ENCODE measurements at regions of chr12 and their contacts with region 1.

Region 1: GRCh38 chr12:12442548-12443071 is 85.7 kb downstream of the BORCS5 start:
- DNase-seq: peak in 1 of 3 donors; percentile 35
- H3K4me3 ChIP-seq: no peak overlapping the region
- H3K4me3 Mint-ChIP-seq: no peak overlapping the region
- H3K27ac ChIP-seq: no peak overlapping the region
- H3K27ac Mint-ChIP-seq: peak overlapping the region in 2 of 7 donors; percentile 11 to 34
- H3K4me1 ChIP-seq: peaks cover 7 to 10% of the 10 kb centered on the region in 2 donors
- H3K4me1 Mint-ChIP-seq: peaks cover 18% of the 10 kb centered on the region
- H3K27me3 ChIP-seq: no peaks in the 10 kb centered on the region
- H3K27me3 Mint-ChIP-seq: peaks cover 0 to 1% (median 0%) of the 10 kb centered on the region in 3 donors
- CTCF ChIP-seq: no peak

Region 2: DNA sequence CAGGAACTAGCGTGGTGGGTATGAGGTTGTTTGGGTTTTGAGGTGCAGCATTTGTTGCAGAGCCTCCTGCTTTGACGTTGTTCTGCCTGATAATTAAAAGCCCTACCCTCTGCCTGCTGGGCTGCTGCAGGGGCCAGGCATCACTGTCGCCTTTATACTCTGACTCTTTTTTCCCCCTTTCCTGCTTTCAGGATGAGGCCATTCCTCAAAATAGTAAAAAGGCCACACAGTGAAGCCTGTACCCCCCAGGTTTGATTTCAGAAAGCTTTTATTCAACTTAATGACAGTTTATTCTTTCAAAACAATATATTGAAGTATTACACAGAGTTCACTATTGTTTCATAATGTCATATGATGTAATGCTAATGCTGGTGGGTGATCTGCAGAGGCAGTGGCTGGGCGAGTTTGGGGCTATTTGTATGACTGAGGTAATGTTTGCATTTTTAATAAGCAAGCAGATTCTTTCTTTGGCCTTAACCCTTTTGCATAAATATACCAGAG is 76.6 kb before region 1 on chr12:
- intact Hi-C with region 1: no loop called
- DNase-seq: no peak
- H3K4me3 ChIP-seq: no peak overlapping the region
- H3K4me3 Mint-ChIP-seq: no peak overlapping the region
- H3K27ac ChIP-seq: peak overlapping the region in 1 of 2 donors; percentile 23
- H3K27ac Mint-ChIP-seq: peak overlapping the region in 4 of 7 donors; percentile 3 to 58 (median 45)
- H3K4me1 ChIP-seq: peaks cover 0 to 6% of the 10 kb centered on the region in 2 donors
- H3K4me1 Mint-ChIP-seq: peaks cover 13% of the 10 kb centered on the region
- H3K27me3 ChIP-seq: no peaks in the 10 kb centered on the region
- H3K27me3 Mint-ChIP-seq: no peaks in the 10 kb centered on the region
- CTCF ChIP-seq: no peak

Region 3: GRCh38 chr12:12384571-12385340 is 57.9 kb before region 1 on chr12:
- intact Hi-C with region 1: loop called in 1 of 2 experiments (anchors 10 kb)
- DNase-seq: no peak
- H3K4me3 ChIP-seq: no peak overlapping the region
- H3K4me3 Mint-ChIP-seq: no peak overlapping the region
- H3K27ac ChIP-seq: no peak overlapping the region
- H3K27ac Mint-ChIP-seq: peak overlapping the region in 2 of 7 donors; percentile 37 to 56
- H3K4me1 ChIP-seq: peaks cover 7 to 9% of the 10 kb centered on the region in 2 donors
- H3K4me1 Mint-ChIP-seq: peaks cover 11% of the 10 kb centered on the region
- H3K27me3 ChIP-seq: no peaks in the 10 kb centered on the region
- H3K27me3 Mint-ChIP-seq: peaks cover 0 to 2% (median 1%) of the 10 kb centered on the region in 3 donors
- CTCF ChIP-seq: no peak

Region 4: GRCh38 chr12:12403264-12404248 is 39.1 kb before region 1 on chr12:
- intact Hi-C with region 1: loop called in 1 of 2 experiments (anchors 5 kb)
- DNase-seq: no peak
- H3K4me3 ChIP-seq: no peak overlapping the region
- H3K4me3 Mint-ChIP-seq: no peak overlapping the region
- H3K27ac ChIP-seq: no peak overlapping the region
- H3K27ac Mint-ChIP-seq: peak overlapping the region in 2 of 7 donors; percentile 21 to 54
- H3K4me1 ChIP-seq: peaks cover 6 to 10% of the 10 kb centered on the region in 2 donors
- H3K4me1 Mint-ChIP-seq: peaks cover 24% of the 10 kb centered on the region
- H3K27me3 ChIP-seq: no peaks in the 10 kb centered on the region
- H3K27me3 Mint-ChIP-seq: no peaks in the 10 kb centered on the region
- CTCF ChIP-seq: no peak

Region 5: GRCh38 chr12:12916135-12916944 is 473.7 kb after region 1 on chr12:
- intact Hi-C with region 1: no loop called
- DNase-seq: peak; percentile 67 to 75 (median 72)
- H3K4me3 ChIP-seq: peak overlapping the region in 1 of 3 experiments; percentile 45
- H3K4me3 Mint-ChIP-seq: peak overlapping the region; percentile 4 to 77
- H3K27ac ChIP-seq: no peak overlapping the region
- H3K27ac Mint-ChIP-seq: no peak overlapping the region
- H3K4me1 ChIP-seq: peaks cover 8 to 9% of the 10 kb centered on the region in 2 donors
- H3K4me1 Mint-ChIP-seq: peaks cover 20% of the 10 kb centered on the region
- H3K27me3 ChIP-seq: no peaks in the 10 kb centered on the region
- H3K27me3 Mint-ChIP-seq: peaks cover 0 to 10% (median 6%) of the 10 kb centered on the region in 3 donors
- CTCF ChIP-seq: peak; percentile 92